ENCODE measurements at regions of chr22 and their contacts with region 1.

Region 1: DNA sequence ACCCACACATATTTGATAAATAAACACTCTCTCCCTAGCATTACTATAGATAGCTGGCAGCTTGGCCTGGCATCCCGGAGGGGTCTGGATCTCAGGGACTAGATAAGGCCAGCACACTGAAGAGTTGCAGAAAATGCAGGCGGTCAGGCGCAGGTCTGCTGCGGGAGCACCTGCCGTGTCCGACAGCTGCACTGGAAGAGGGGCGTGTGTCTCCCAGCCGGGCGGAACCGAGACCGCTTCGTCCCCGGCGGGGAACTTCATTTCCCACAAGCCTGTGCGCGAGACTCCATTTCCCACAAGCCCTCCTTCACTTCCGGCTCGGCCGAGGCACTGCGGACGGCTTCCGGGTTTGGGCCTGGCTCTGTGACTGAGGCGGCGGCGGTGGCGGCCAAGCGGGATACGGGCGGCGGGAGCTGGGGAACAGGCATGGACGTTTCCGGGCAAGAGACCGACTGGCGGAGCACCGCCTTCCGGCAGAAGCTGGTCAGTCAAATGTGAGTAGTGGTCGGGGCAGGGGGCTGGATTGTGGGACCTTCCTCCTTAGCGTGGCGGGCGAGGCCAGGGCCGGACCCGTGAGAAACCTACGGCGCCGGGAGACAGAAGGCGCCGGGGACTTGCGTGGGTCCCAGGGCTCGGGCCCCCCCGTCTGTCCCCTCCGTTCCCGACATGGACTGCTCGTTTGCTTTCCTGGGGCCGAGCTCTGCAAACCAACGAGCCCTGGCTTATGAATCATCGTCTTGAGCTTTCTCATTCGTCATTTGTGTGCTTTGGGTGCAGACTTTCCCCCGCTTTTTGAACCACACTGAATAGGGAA is at the start of gene MED15:
- H3K4me3 ChIP-seq: peak within 1 kb of the TSS; percentile 95
- H3K27ac ChIP-seq: peak within 1 kb of the TSS; percentile 44
- H3K4me1 ChIP-seq: peaks cover 9% of the 10 kb centered on the region
- CTCF ChIP-seq: 0 out of 2 replicates have a peak, but pooled peaks have one; percentile 11

Region 2: GRCh38 chr22:20523086-20523983 is 15.9 kb after region 1 on chr22:
- CTCF ChIA-PET with region 1: interaction called, 6 read pairs
- POLR2A ChIA-PET with region 1: interaction called, 35 read pairs
- H3K4me3 ChIP-seq: no peak overlapping the region
- H3K27ac ChIP-seq: no peak overlapping the region
- H3K4me1 ChIP-seq: peaks cover 6% of the 10 kb centered on the region; the same call in 1 of the 2 replicates
- CTCF ChIP-seq: no peak

Region 3: DNA sequence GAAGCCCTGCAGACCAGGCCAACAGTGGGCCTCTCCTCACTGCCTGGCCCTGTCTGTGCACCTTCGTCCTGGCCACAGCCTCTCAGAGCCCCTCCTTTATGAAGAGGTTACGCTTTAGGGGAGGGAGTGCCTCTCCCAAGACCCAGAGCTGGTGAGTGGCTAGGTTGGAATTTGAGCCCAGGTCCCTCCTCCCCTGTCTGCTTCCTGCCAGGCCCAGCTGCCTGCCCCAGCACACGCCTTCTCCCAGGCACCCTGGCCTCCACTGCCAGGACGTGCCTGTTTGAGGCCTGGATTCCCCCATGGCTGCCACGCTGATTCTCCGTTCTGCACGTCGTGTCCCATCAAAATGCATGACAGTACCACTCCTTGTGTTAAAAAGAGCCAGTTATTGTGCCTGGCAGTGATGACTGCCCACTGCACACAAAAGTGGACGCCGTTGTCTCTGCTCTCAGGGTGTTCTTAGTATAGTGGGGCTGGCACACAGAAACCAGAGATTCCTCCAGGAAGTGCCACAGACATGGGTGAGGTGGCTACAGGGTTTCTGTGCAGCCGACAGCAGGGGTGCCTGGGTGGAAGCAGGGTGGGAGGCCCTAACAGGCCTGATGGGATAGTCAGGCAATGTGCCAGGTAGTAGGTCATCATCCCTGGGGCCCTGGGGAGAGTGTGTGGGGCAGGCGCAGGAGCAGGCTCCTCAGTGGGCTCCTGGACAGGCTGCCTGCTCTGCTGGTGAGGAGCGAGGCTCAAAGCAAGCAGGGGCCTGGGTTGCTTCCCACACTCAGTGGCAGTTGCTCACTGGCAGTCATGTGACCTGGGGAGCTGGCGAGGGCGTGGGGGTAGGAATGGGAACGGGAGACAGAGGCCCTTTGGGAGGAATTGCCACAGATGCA is 24.1 kb after region 1 on chr22:
- CTCF ChIA-PET with region 1: interaction called, 6 read pairs
- POLR2A ChIA-PET with region 1: interaction called, 35 read pairs
- H3K4me3 ChIP-seq: no peak overlapping the region
- H3K27ac ChIP-seq: peak overlapping the region; percentile 65
- H3K4me1 ChIP-seq: peaks cover 17% of the 10 kb centered on the region
- CTCF ChIP-seq: no peak